H1 (cell line): ENCODE measurements at regions of chr3 and their contacts with region 1.

Region 1: GRCh38 chr3:128603811-128604775 is 46.5 kb downstream of the RPN1 start:
- DNase-seq: no peak
- H3K4me3 ChIP-seq: no peak overlapping the region
- H3K27ac ChIP-seq: no peak overlapping the region
- H3K4me1 ChIP-seq: peaks cover 0 to 2% (median 0%) of the 10 kb centered on the region in 4 experiments; a peak in 1 of 7 replicates
- H3K27me3 ChIP-seq: peaks cover 0 to 8% (median 4%) of the 10 kb centered on the region in 4 experiments; a peak in 4 of 7 replicates
- CTCF ChIP-seq: no peak
- EP300 ChIP-seq: no peak
- POLR2A ChIP-seq: no peak
- RAD21 ChIP-seq: no peak

Region 2: DNA sequence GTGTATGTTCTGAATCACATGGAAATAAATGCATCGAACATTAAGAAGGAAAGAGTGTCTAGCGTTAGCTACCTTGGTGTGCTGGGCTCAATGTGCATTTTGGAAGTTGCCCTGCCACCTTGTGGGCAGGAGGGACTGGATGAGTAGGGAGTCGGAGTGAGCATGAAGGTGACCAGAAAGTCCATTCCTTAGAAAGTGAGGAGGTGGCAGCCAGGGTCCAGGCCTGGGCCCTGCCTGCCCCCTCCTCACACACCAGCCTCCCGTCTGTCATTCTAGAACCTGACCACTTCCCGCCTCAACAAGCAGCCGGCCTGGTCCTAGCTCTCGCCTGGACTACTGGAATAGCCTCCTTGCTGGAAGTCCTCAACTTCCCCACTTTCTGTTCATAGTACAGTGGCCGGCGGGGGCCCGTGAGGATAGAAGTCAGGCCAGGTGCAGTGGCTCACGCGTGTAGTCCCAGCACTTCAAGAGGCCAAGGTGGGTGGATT is 100.9 kb before region 1 on chr3:
- CTCF ChIA-PET with region 1: interaction called, 21 read pairs
- POLR2A ChIA-PET with region 1: no interaction called
- DNase-seq: peak in 1 of 2 experiments; percentile 50
- H3K4me3 ChIP-seq: no peak overlapping the region
- H3K27ac ChIP-seq: no peak overlapping the region; the same call in 1 of the 2 replicates
- H3K4me1 ChIP-seq: peaks cover 0 to 2% (median 0%) of the 10 kb centered on the region in 4 experiments; a peak in 1 of 7 replicates
- H3K27me3 ChIP-seq: peaks cover 0 to 11% (median 10%) of the 10 kb centered on the region in 4 experiments; a peak in 6 of 7 replicates
- CTCF ChIP-seq: peak in 2 of 3 experiments; percentile 56 to 64; a peak in 3 of 4 replicates
- EP300 ChIP-seq: no peak
- POLR2A ChIP-seq: no peak
- RAD21 ChIP-seq: peak; percentile 54 to 70

Region 3: GRCh38 chr3:128584412-128585020 is 19.6 kb before region 1 on chr3:
- CTCF ChIA-PET with region 1: interaction called, 182 read pairs
- POLR2A ChIA-PET with region 1: no interaction called
- DNase-seq: peak in 1 of 2 experiments; percentile 80
- H3K4me3 ChIP-seq: no peak overlapping the region
- H3K27ac ChIP-seq: no peak overlapping the region
- H3K4me1 ChIP-seq: peaks cover 0 to 3% (median 2%) of the 10 kb centered on the region in 4 experiments; a peak in 4 of 7 replicates
- H3K27me3 ChIP-seq: peaks cover 0 to 7% (median 5%) of the 10 kb centered on the region in 4 experiments; a peak in 3 of 7 replicates
- CTCF ChIP-seq: peak in 2 of 3 experiments; percentile 95 to 97; a peak in 3 of 4 replicates
- EP300 ChIP-seq: 0 out of 3 replicates have a peak, but pooled peaks of 1 of the 2 experiments have one; percentile 7
- POLR2A ChIP-seq: no peak
- RAD21 ChIP-seq: peak; percentile 98 to 100

Region 4: DNA sequence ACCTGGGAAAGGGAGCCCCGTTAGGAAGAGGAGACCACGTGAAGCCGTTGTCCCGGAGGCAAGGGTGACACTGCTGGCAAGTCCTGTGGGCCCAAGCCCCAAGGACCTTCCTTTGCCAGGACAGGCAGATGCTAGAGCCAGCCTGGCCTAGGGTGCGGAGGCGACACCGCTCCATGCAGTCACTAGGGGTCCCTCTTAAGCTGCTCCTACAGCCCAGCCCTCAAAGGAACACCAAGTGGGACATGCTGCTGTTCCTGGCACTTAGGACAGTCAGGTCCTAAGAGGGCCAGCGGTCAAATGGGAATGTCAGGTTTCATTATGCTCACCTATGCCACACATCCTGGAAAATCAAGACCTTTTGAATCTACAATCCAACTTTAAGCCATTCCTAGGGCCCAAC is 13.1 kb before region 1 on chr3:
- CTCF ChIA-PET with region 1: interaction called, 182 read pairs
- POLR2A ChIA-PET with region 1: no interaction called
- DNase-seq: peak in 1 of 2 experiments; percentile 75
- H3K4me3 ChIP-seq: no peak overlapping the region
- H3K27ac ChIP-seq: no peak overlapping the region
- H3K4me1 ChIP-seq: no peaks in the 10 kb centered on the region; a peak in 1 of 7 replicates
- H3K27me3 ChIP-seq: no peaks in the 10 kb centered on the region
- CTCF ChIP-seq: peak; percentile 81 to 90 (median 87)
- EP300 ChIP-seq: no peak
- POLR2A ChIP-seq: no peak
- RAD21 ChIP-seq: peak; percentile 73 to 84

Region 5: GRCh38 chr3:128617557-128618397 is 13.7 kb after region 1 on chr3:
- CTCF ChIA-PET with region 1: interaction called, 11 read pairs
- POLR2A ChIA-PET with region 1: interaction called, 4 read pairs
- DNase-seq: peak; percentile 84 to 97
- H3K4me3 ChIP-seq: peak overlapping the region; percentile 71 to 94 (median 86)
- H3K27ac ChIP-seq: peak overlapping the region; percentile 77
- H3K4me1 ChIP-seq: peaks cover 0 to 7% (median 5%) of the 10 kb centered on the region in 4 experiments; a peak in 6 of 7 replicates
- H3K27me3 ChIP-seq: no peaks in the 10 kb centered on the region
- CTCF ChIP-seq: peak in 2 of 3 experiments; percentile 52 to 90; a peak in 3 of 4 replicates
- EP300 ChIP-seq: no peak; a peak in 1 of 3 replicates
- POLR2A ChIP-seq: peak in 1 of 2 experiments; percentile 72; a peak in 2 of 3 replicates
- RAD21 ChIP-seq: peak; percentile 55 to 65